Posterior cingulate gyrus (tissue), 11 donors: ENCODE measurements at regions of chr4 and their contacts with region 1.

Region 1: GRCh38 chr4:102620697-102621497 is 119.7 kb downstream of the NFKB1 start:
- DNase-seq: peak in 3 of 10 donors; percentile 35 to 88 (median 58)

Region 2: DNA sequence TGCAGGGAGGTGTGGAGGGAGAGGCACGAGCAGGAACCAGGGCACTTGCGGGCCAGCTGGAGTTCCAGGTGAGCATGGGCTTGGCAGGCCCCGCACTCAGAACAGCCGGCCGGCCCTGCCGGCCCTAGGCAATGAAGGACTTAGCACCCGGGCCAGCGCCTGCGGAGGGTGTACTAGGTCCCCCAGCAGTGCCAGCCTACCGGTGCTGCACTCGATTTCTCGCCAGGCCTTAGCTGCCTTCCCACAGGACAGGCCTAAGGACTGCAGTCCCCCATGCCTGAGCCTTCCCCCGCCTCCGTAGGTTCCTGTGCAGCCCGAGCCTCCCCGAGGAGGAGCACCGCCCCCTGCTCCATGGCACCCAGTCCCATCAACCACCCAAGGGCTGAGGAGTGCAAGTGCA is 137.8 kb before region 1 on chr4:
- intact Hi-C with region 1: no loop called
- DNase-seq: peak in 3 of 10 donors; percentile 44 to 66 (median 56)

Region 3: DNA sequence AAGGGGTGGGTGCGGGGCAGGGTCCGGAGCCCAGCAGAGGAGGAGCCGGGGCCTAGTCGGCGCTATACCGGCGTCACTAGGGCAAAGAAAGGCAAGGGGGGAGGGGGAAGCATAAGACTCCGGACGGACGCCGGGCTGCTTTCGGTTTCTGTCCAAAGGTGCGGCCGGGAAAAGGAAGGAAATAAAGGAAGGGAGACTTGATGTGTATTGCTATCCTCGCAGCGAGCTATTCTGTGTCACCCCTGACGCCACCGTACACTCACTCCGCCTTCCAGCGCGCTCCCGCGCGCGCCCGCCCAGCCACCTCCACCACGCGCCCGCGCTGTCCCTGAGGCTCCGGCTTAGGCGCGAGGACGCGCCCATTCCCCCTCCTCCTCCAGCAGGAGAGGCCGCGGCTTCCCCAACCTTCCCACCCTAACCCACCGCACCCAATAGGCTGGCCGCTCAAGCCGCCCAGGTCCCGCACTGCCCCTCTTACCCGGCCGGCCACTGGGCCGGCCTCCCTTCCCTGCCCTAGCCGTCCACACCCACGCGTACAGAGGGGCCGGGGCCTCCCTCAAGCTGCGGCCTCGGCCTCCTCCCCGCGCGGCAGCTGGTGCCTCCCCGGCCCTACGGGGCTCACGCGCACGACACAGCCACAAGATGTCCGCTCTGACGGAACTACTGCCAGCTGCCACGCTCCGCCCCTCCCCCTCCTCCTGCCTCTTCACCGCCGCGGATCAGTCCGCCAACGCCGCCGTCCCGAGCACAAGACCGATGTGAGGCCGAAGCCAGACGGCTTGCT is 206.2 kb after region 1 on chr4 and contains the start of gene UBE2D3:
- intact Hi-C with region 1: loop called (anchors 5 kb)
- DNase-seq: peak; percentile 85 to 98 (median 89)

Region 4: DNA sequence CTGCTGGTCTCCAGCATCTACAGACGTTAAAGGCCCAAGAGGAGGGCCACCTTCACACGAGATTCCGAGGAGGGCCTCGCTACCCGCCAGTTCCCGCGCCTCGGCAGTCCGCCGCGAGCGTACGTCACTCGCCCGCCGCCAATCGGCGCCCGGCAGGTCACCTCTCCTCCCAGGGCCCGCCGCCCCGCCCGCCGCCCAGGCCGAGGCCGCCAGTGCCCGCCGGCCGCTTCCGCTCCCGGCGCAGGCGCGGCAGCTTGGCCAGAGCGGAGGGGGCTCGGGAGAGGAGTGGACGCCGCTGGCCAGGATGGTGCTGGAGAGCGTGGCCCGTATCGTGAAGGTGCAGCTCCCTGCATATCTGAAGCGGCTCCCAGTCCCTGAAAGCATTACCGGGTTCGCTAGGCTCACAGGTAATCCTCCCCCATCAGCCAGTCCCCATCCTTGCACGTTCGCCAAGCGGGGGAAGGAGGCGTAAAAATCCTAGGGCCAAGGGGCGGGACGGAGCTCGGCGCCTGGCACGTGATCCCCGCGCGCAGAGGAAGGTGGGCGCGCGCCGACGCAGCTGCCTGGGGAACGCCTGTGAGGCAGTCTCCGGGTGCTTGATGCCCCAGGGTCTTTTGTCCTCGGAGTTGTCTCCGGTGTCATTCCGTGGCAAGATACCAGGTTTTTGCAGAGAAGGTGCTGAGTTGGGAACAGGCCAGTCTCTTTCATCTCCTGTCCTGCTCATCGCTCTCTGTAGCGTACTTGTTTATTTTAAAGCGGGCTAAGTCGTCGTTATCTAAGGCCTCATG is 248.1 kb after region 1 on chr4 and contains the start of gene CISD2:
- intact Hi-C with region 1: loop called (anchors 5 kb)
- DNase-seq: peak; percentile 86 to 99 (median 93)

Region 5: GRCh38 chr4:103002551-103002950 is 381.7 kb after region 1 on chr4:
- intact Hi-C with region 1: loop called (anchors 2 kb)
- DNase-seq: no peak

Region 6: DNA sequence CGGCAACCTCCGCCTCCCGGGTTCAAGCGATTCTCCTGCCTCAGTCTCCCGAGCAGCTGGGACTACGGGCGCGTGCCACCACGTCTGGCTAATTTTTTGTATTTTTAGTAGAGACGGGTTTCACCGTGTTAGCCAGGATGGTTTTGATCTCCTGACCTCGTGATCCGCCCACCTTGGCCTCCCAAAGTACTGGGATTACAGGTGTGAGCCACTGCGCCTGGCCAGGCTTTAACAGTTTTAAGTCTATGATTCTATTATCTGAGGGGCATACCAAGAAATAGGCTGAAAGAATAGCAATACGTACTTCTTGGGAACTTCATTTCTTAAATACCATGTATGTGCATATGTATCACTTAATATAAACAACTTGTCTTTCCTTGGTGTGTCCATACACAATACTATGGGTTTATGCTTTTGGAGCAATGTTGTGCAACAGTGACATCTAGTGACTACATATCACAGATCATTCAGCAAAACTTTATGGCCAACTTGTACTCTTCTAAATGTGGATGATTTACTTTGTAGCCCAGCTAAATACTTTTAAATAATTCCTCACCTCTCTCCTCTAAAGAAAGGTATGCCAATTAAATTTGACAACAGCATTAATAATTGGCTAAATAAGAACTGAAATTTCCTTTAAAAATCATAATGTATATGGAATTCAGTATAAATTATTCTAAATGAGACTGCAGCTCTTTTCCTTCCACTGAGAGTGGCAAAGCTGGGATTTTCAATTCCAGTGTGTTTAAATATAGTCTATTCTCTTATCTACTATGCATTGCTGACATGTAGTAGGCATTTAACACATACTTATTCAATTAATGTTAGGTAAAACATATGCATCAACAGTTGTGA is 388.2 kb after region 1 on chr4:
- intact Hi-C with region 1: loop called (anchors 2 kb)
- DNase-seq: no peak

Region 7: GRCh38 chr4:103091601-103092223 is 470.8 kb after region 1 on chr4:
- intact Hi-C with region 1: loop called (anchors 5 kb)
- DNase-seq: peak in 3 of 10 donors; percentile 12 to 54 (median 20)